HEK293T (cell line): ENCODE measurements at regions of chr17 and their contacts with region 1.

Region 1: DNA sequence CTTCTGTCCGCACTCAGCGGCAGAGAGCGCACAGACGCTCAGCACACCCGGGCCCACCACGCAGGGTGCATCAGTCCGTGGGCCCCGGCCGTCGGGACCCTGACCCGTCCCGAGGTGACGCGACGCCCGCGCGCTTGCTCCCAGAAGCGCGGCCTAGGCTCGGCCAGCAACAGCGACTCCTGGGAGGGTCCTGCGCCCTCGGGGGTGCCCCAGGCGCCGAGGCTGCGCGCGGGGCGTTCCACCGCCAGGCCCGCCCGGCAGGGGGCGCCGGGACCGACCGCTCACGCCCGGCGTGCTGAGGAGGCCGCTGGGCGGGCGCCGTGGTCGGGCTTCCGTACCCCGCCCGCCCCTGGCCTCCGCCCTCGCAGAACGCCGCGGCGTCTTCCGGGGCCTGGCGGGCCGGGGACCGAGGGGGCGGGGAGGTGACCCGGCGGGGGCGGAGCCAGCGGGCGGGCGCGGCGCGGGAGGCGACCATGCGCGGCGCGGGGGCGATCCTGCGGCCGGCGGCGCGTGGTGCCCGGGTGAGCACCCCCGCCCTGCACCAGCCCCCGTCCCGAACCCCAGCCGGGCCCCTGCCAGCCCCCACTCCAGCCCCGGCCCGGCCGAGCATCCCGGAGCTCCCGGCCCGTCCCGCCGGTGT is at the start of gene CISD3:
- DNase-seq: peak; percentile 78

Region 2: GRCh38 chr17:38674749-38675615 is 55.0 kb before region 1 on chr17 and contains the start of gene EPOP:
- CTCF ChIA-PET with region 1: interaction called, 11 read pairs
- POLR2A ChIA-PET with region 1: interaction called, 10 read pairs
- DNase-seq: peak; percentile 83

Region 3: GRCh38 chr17:38752119-38752929 is 22.3 kb after region 1 on chr17 and contains the start of gene PSMB3:
- CTCF ChIA-PET with region 1: interaction called, 7 read pairs
- POLR2A ChIA-PET with region 1: interaction called, 19 read pairs
- DNase-seq: peak; percentile 87

Region 4: GRCh38 chr17:38766341-38766740 is 36.3 kb after region 1 on chr17:
- CTCF ChIA-PET with region 1: no interaction called
- POLR2A ChIA-PET with region 1: no interaction called
- DNase-seq: no peak

Region 5: GRCh38 chr17:38809828-38810227 is 79.8 kb after region 1 on chr17:
- CTCF ChIA-PET with region 1: no interaction called
- POLR2A ChIA-PET with region 1: no interaction called
- DNase-seq: no peak

Region 6: DNA sequence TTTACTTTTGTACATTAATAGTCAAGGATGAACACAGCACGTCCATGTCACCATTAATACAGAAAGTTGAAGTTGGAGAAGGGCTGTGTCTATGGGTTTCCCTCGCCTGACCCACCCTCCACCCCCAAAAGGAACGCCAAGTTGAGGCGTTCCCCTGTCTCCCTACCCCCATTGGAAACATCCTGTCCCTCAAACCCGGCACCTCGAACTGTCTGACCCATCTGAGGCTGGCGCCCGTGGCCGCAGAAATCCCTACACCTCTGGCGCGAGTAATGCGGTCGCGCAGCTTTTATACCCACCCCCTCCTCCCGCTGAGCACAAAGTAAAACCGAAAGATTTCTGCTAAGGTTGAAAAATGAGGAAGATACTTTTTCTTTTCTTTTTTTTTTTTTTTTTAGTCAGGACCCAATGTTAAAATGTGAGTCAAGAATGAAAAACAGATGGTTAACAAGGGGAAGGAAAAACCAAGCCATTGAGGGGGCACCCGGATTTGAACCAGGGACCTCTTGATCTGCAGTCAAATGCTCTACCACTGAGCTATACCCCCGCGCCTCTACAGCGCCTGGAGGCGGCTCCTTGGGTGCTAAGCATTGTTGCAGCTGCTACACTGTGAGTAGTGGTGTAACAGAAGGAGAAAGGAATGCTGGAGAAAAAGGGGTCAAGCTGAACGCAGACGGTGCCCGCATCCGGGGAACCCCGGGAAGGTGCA is 139.0 kb after region 1 on chr17:
- CTCF ChIA-PET with region 1: no interaction called
- POLR2A ChIA-PET with region 1: no interaction called
- DNase-seq: peak; percentile 60

Region 7: GRCh38 chr17:38912221-38912813 is 182.3 kb after region 1 on chr17:
- CTCF ChIA-PET with region 1: no interaction called
- POLR2A ChIA-PET with region 1: no interaction called
- DNase-seq: no peak